A673 (cell line): ENCODE measurements at regions of chr3 and their contacts with region 1.

Region 1: DNA sequence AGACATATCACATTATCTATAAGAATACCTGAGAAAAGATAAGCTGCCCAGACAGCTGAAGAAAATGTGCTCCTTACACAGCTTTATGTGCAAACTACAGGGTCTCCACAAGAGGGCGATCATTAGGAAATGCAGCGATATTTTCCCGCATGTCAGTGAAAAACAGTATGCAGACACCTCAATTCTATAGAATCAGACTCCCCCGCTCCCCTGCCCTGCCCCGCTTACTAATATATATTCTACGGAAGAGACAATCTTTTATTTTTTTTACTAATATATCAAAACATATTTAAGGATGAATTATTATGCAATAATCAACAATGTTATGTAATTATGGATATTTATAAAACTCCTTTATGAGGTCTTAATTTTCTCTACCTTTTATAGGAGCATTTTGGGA is 681.3 kb downstream of the ROBO1 start:
- DNase-seq: peak; percentile 72
- H3K4me3 ChIP-seq: no peak overlapping the region
- H3K27ac ChIP-seq: no peak overlapping the region
- H3K4me1 ChIP-seq: no peaks in the 10 kb centered on the region
- H3K27me3 ChIP-seq: peaks cover 6% of the 10 kb centered on the region
- CTCF ChIP-seq: peak; percentile 88

Region 2: GRCh38 chr3:78459796-78460195 is 626.7 kb before region 1 on chr3:
- CTCF ChIA-PET with region 1: no interaction called
- POLR2A ChIA-PET with region 1: no interaction called
- intact Hi-C with region 1: no loop called
- DNase-seq: no peak
- H3K4me3 ChIP-seq: no peak overlapping the region
- H3K27ac ChIP-seq: no peak overlapping the region
- H3K4me1 ChIP-seq: peaks cover 6% of the 10 kb centered on the region
- H3K27me3 ChIP-seq: no peaks in the 10 kb centered on the region
- CTCF ChIP-seq: no peak

Region 3: DNA sequence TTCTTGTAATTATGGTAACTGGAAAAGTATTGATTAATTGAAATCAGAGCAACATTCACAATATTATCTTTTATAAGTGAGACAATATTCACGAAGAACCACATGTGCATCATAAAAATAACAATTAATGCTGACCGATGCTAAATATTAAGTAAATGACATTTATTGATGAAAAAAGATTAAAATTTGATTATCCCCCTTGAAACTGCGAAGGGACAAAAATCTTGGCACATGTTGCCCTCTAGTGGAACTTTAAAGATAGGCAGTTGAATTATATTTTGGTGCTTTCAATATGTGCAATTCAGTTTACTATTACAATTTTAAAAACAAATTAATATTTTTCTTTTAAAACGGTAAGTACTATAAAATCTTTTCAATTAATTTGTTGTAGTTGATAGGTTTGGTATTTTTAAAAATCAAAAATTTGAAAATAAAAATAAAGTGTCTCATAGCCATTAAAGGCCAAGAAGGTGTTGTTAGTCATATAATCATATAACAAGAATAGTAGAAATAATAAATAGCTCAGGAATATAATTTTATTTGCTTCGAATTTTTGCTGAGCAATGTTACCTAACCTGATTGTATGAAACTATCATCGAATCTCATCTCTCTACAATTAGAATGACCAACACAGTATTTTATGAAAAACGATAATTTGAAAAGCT is 411.1 kb after region 1 on chr3:
- CTCF ChIA-PET with region 1: no interaction called
- POLR2A ChIA-PET with region 1: no interaction called
- intact Hi-C with region 1: loop called (anchors 10 kb)
- DNase-seq: peak; percentile 28
- H3K4me3 ChIP-seq: no peak overlapping the region
- H3K27ac ChIP-seq: no peak overlapping the region
- H3K4me1 ChIP-seq: no peaks in the 10 kb centered on the region
- H3K27me3 ChIP-seq: no peaks in the 10 kb centered on the region
- CTCF ChIP-seq: peak; percentile 81

Region 4: DNA sequence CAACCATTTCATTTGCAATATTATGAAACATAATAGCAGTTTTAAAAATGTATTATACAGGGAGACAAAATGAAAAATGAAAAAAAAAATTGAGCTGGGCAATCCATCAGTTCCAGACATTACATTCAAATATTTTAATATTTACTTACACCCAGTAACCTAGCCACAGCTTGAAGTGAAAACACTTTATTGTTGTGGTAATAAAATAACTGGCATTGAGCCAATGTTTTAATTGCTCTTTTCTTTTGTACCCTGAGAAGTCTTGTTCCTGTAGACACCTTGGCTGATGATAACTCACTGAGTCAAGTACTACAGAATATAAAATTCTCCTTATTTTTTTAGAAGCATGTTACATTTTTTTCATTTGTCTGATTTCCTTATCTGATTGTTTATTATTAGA is 500.6 kb after region 1 on chr3:
- CTCF ChIA-PET with region 1: no interaction called
- POLR2A ChIA-PET with region 1: no interaction called
- intact Hi-C with region 1: no loop called
- DNase-seq: no peak
- H3K4me3 ChIP-seq: no peak overlapping the region
- H3K27ac ChIP-seq: no peak overlapping the region
- H3K4me1 ChIP-seq: no peaks in the 10 kb centered on the region
- H3K27me3 ChIP-seq: no peaks in the 10 kb centered on the region
- CTCF ChIP-seq: no peak